ENCODE measurements at regions of chr7 and their contacts with region 1.

Region 1: GRCh38 chr7:44847508-44847920 is 373 bp downstream of the H2AZ2 start:
- DNase-seq: peak; percentile 84 to 91
- ATAC-seq: peak; percentile 54 to 76 (median 62)
- H3K4me3 ChIP-seq: peak overlapping the region; percentile 83
- H3K4me3 Mint-ChIP-seq: peak overlapping the region; percentile 98
- H3K27ac ChIP-seq: peak overlapping the region; percentile 100
- H3K27ac Mint-ChIP-seq: peak overlapping the region; percentile 98 to 99
- H3K4me1 ChIP-seq: peaks cover 15% of the 10 kb centered on the region
- H3K4me1 Mint-ChIP-seq: peaks cover 28 to 38% of the 10 kb centered on the region in 2 donors
- H3K27me3 ChIP-seq: no peaks in the 10 kb centered on the region
- H3K27me3 Mint-ChIP-seq: no peaks in the 10 kb centered on the region
- CTCF ChIP-seq: peak; percentile 81

Region 2: DNA sequence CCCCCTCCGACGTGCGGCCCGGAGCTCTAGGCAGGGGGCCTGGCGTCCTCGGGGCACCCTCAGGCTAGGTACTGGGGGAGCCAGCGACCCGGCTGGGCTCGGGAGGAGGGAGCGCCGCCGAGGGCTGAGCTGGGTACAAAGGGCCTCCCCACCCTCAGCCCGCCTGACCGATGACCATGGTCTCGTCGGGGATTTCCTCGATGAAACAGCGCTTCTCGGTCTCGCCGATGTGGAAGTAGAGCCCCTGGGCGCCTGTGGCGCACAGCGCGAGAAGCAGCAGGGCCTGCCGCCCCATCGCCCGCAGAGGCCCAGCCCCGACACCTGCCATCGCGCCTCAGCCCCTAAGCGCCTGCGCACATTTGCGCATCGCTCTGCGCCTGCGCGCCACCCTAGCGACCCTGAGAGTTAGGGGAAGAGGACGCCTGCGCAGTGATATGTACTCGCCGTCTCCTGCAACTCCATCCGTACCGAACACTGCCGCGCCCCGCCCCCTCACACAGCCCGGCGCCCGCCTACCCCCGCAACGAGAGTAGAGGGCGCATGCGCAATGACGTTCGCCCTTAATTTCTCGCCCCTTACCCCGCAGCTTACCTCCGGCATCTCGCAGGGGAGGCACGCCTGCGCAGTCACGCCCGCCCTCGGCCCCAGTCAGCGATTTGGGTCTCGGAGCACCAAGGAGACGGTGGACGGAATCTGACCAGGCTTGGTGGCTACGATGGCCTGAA is 265.5 kb before region 1 on chr7 and contains the start of gene TMED4:
- intact Hi-C with region 1: loop called (anchors 2 kb)
- DNase-seq: peak; percentile 100
- ATAC-seq: peak; percentile 87 to 97 (median 87)
- H3K4me3 ChIP-seq: peak within 1 kb of the TSS; percentile 75
- H3K4me3 Mint-ChIP-seq: peak within 1 kb of the TSS; percentile 91
- H3K27ac ChIP-seq: peak within 1 kb of the TSS; percentile 95
- H3K27ac Mint-ChIP-seq: peak within 1 kb of the TSS; percentile 97 to 98
- H3K4me1 ChIP-seq: peaks cover 23% of the 10 kb centered on the region
- H3K4me1 Mint-ChIP-seq: peaks cover 30 to 31% of the 10 kb centered on the region in 2 donors
- H3K27me3 ChIP-seq: no peaks in the 10 kb centered on the region
- H3K27me3 Mint-ChIP-seq: no peaks in the 10 kb centered on the region
- CTCF ChIP-seq: no peak
- total RNA-seq, gene TMED4: 93.1 to 101 (median 94.1) TPM

Region 3: GRCh38 chr7:44633254-44634186 is 214.0 kb before region 1 on chr7:
- intact Hi-C with region 1: loop called (anchors 2 kb)
- DNase-seq: peak in 1 of 2 donors; percentile 87
- ATAC-seq: peak; percentile 19 to 57 (median 43)
- H3K4me3 ChIP-seq: no peak overlapping the region
- H3K4me3 Mint-ChIP-seq: peak overlapping the region; percentile 31
- H3K27ac ChIP-seq: peak overlapping the region; percentile 86
- H3K27ac Mint-ChIP-seq: peak overlapping the region; percentile 72 to 94
- H3K4me1 ChIP-seq: peaks cover 99% of the 10 kb centered on the region
- H3K4me1 Mint-ChIP-seq: peaks cover 77 to 78% of the 10 kb centered on the region in 2 donors
- H3K27me3 ChIP-seq: no peaks in the 10 kb centered on the region
- H3K27me3 Mint-ChIP-seq: no peaks in the 10 kb centered on the region
- CTCF ChIP-seq: no peak

Region 4: DNA sequence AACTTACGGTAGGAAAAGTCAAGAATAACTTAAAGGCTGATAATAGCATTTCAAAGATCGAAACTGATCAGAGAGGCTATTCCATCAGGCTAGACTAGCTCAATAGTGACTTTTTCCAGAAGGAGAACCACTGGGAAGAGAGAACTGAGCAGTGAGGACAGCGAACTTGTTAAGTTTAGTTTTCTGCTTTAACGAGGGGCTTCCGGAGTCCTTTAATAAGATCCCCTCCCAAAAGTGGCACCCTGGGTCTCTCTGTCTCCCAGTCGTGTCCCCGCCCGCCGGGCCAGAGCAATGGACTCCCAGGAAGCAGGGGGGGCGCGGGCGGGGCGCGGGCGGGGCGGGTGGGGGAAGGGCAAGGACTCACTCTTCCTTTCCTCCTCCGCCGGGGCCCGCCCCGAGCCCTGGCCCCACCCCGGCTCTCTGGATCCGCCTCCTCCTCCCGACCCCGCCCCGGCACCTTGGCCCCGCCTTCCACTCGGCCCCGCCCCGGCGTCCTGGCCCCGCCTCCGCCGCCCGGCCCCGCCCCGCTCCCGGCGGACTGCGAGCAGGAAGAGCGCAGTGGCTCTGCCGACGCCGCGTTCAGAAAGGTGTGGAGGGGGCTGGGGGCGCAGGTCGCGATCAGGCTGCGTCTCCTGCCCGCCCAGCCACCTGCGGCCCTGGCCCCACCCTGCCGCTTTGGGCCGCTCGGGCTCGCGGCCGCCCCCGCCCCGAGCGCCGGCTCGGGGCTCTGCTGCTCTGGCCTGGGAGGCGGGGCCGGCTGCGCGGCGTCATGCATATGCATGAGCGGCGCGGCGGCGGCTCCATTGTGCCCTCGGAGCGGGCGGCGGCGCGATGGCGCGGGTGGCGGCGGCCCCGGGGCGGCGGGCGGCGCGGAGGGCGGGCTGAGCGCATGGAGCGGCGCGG is 99.2 kb before region 1 on chr7 and contains the start of gene ZMIZ2:
- intact Hi-C with region 1: loop called (anchors 5 kb)
- DNase-seq: peak; percentile 93 to 94
- ATAC-seq: peak; percentile 89 to 97 (median 93)
- H3K4me3 ChIP-seq: peak within 1 kb of the TSS; percentile 78
- H3K4me3 Mint-ChIP-seq: peak within 1 kb of the TSS; percentile 94
- H3K27ac ChIP-seq: peak within 1 kb of the TSS; percentile 77
- H3K27ac Mint-ChIP-seq: peak within 1 kb of the TSS; percentile 85 to 96
- H3K4me1 ChIP-seq: peaks cover 31% of the 10 kb centered on the region
- H3K4me1 Mint-ChIP-seq: peaks cover 37 to 48% of the 10 kb centered on the region in 2 donors
- H3K27me3 ChIP-seq: no peaks in the 10 kb centered on the region
- H3K27me3 Mint-ChIP-seq: no peaks in the 10 kb centered on the region
- CTCF ChIP-seq: no peak
- total RNA-seq, gene ZMIZ2: 152 to 170 (median 167) TPM

Region 5: DNA sequence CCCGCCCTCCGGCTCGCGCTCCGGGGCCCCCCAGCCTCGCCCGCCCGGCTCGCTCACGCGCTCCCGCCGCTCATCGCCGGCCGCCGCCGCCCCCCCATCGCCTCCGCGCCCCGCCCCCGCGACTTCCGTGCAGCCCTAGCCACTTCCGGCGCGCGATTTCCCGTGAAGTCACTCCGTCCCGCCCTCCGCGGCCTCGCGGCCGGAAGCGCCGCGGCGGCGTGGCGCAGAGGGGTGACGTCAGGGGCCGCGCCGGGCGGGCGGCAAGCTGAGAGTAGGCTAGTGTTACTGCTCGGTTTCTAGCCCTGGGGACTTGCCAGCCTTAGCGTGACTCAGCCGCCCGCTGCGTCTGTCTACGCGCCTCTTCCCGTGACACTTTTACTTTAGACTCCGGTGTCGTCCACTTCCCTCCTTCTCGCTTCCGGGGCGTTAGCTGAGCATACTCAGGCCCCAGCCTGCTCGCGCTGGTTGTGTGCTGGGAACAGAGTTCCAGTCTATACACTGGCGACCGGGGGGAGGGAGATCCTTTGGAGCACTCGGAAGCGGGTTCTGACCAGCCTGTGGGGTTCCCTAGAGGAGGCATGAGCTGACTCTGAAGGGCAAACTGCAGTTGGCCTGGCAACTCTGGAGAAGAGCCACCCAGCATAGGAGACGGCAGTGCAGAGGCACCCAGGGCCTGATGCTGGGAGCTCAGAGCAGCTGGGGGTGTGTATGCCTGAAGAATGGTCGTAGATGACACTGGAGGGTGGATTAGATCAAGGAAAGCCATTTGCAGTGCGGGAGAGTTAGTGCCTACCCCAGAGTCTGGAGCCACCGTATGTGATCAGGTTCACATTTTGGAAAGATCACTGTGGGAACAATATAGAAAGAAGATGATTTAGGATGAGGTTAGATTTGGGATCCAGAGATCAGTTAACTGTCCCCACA is 38.1 kb after region 1 on chr7 and contains the start of gene PURB:
- intact Hi-C with region 1: loop called (anchors 1 kb)
- DNase-seq: peak; percentile 98 to 99
- ATAC-seq: peak; percentile 83 to 94 (median 86)
- H3K4me3 ChIP-seq: peak within 1 kb of the TSS; percentile 75
- H3K4me3 Mint-ChIP-seq: peak within 1 kb of the TSS; percentile 99
- H3K27ac ChIP-seq: peak within 1 kb of the TSS; percentile 97
- H3K27ac Mint-ChIP-seq: peak within 1 kb of the TSS; percentile 100
- H3K4me1 ChIP-seq: peaks cover 35% of the 10 kb centered on the region
- H3K4me1 Mint-ChIP-seq: peaks cover 34 to 45% of the 10 kb centered on the region in 2 donors
- H3K27me3 ChIP-seq: no peaks in the 10 kb centered on the region
- H3K27me3 Mint-ChIP-seq: no peaks in the 10 kb centered on the region
- CTCF ChIP-seq: no peak
- total RNA-seq, gene PURB: 28.5 to 36.0 (median 33.7) TPM

Region 6: DNA sequence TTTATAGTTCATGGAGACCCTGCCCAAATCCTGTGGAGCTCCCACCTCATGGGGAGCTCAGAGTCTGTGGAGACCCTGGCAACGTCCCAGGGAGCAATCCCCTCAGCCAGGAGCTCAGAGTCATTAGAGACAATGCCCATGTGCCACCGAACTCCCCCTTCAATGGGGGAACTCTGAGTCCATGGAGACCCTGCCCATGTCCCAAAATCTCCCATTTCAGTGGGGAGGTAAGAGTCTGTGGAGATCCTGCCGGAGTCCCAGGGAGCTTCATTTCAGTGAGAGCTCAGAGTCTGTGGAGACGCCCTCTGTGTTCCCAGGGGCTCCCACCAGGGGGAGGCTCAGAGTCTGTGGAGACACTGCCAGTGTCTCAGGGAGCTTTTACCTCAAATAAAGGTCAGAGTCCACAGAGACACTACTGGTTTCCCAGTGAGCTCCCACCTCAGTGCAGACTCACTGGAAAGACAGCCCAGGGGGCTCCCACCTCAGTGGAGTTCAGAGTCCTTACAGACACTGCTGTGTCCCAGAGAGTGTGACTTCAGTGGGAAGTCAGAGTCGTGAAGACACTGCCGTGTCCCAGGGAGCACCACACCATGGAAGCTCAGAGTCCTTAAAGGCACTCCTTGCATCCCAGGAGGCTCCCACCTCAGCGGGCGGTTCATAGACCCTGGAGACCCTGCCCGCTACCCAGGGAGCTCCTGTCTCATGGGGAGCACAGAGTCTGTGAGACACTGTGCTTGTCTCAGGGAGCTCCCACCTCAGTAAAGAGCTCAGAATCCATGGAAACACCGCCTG is 126.3 kb after region 1 on chr7:
- intact Hi-C with region 1: loop called (anchors 5 kb)
- DNase-seq: peak; percentile 51 to 76
- ATAC-seq: peak; percentile 28 to 45 (median 38)
- H3K4me3 ChIP-seq: no peak overlapping the region
- H3K4me3 Mint-ChIP-seq: peak overlapping the region; percentile 13
- H3K27ac ChIP-seq: no peak overlapping the region
- H3K27ac Mint-ChIP-seq: peak overlapping the region; percentile 50 to 99
- H3K4me1 ChIP-seq: peaks cover 57% of the 10 kb centered on the region
- H3K4me1 Mint-ChIP-seq: peaks cover 34 to 53% of the 10 kb centered on the region in 2 donors
- H3K27me3 ChIP-seq: no peaks in the 10 kb centered on the region
- H3K27me3 Mint-ChIP-seq: no peaks in the 10 kb centered on the region
- CTCF ChIP-seq: peak; percentile 58

Region 7: GRCh38 chr7:45111298-45112223 is 264.0 kb after region 1 on chr7 and contains the start of gene TBRG4:
- intact Hi-C with region 1: loop called (anchors 5 kb)
- DNase-seq: peak; percentile 94 to 98
- ATAC-seq: peak; percentile 93 to 97 (median 96)
- H3K4me3 ChIP-seq: peak within 1 kb of the TSS; percentile 66
- H3K4me3 Mint-ChIP-seq: peak within 1 kb of the TSS; percentile 100
- H3K27ac ChIP-seq: peak within 1 kb of the TSS; percentile 90
- H3K27ac Mint-ChIP-seq: peak within 1 kb of the TSS; percentile 100
- H3K4me1 ChIP-seq: peaks cover 33% of the 10 kb centered on the region
- H3K4me1 Mint-ChIP-seq: peaks cover 23 to 37% of the 10 kb centered on the region in 2 donors
- H3K27me3 ChIP-seq: no peaks in the 10 kb centered on the region
- H3K27me3 Mint-ChIP-seq: peaks cover 2 to 10% of the 10 kb centered on the region in 2 donors
- CTCF ChIP-seq: no peak
- total RNA-seq, gene TBRG4: 48.6 to 56.7 (median 55.9) TPM

Measured in natural killer cell (primary cell).